H1 (cell line): ENCODE measurements at regions of chr12 and their contacts with region 1.

Region 1: GRCh38 chr12:76777765-76778216 is 13.9 kb downstream of the ZDHHC17 start:
- DNase-seq: no peak
- H3K4me3 ChIP-seq: no peak overlapping the region
- H3K27ac ChIP-seq: no peak overlapping the region
- H3K4me1 ChIP-seq: peaks cover 0 to 15% (median 7%) of the 10 kb centered on the region in 4 experiments; a peak in 4 of 7 replicates
- H3K27me3 ChIP-seq: no peaks in the 10 kb centered on the region
- CTCF ChIP-seq: no peak
- EP300 ChIP-seq: no peak
- POLR2A ChIP-seq: no peak
- RAD21 ChIP-seq: no peak

Region 2: DNA sequence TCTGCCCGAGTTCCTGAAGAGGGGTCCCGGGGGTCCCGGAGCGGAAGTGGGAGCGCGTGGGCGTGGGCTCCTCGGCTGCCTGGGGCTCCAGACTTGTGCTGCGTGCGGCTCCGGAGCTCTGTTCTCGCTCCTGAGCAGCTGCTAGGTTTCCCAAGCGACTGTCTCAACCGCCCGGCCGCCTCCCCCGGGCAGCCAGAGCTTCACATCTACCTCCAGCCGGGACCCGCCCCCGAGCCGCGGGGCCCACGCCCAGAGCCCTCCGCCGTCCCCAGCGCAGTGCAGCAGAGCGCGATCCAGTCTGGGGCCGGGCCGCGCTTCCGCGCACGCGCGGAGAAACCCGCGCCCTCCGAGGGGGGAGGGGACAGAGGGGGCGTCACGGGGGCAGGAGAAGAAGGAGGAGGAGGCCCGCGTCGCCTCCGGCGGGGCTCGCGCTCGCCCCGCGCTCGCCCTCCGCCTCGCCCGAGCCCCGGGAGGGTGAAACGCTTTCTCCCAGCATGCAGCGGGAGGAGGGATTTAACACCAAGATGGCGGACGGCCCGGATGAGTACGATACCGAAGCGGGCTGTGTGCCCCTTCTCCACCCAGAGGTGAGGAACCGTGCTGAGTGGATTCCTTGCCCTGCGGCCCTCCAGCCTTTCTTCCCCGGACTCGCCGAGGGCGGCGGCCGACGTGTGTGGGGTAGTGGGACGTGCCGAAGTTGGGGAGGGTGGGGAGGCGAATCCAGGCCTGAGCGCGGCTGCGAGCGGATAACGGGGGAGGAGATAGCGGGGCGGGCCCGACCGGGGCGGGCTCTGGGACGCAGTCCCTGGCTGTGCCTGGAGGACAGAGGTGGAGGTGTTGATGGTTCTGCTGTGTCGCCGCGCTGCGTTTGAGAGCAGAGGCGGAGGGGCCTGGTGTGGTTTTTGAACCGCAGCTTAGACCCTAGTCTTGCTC is 13.8 kb before region 1 on chr12 and contains the start of gene ZDHHC17:
- CTCF ChIA-PET with region 1: interaction called, 3 read pairs
- POLR2A ChIA-PET with region 1: interaction called, 15 read pairs
- DNase-seq: peak; percentile 77 to 92
- H3K4me3 ChIP-seq: peak within 1 kb of the TSS; percentile 82 to 98 (median 94)
- H3K27ac ChIP-seq: peak within 1 kb of the TSS; percentile 100
- H3K4me1 ChIP-seq: peaks cover 2 to 14% (median 7%) of the 10 kb centered on the region in 4 experiments; a peak in 6 of 7 replicates
- H3K27me3 ChIP-seq: no peaks in the 10 kb centered on the region
- CTCF ChIP-seq: no peak
- EP300 ChIP-seq: no peak
- POLR2A ChIP-seq: peak; percentile 48 to 94
- RAD21 ChIP-seq: peak in 1 of 2 experiments; percentile 1; a peak in 1 of 4 replicates
- total RNA-seq, gene ZDHHC17: 27.6 and 32.1 TPM in 2 replicates